B cell (primary cell): ENCODE measurements at regions of chr2 and their contacts with region 1.

Region 1: GRCh38 chr2:43219383-43220228 is 6.8 kb downstream of the ZFP36L2 start:
- DNase-seq: peak; percentile 89
- ATAC-seq: peak; percentile 48
- H3K4me3 ChIP-seq: peak overlapping the region; percentile 9 to 92 (median 82)
- H3K4me3 Mint-ChIP-seq: peak overlapping the region; percentile 87
- H3K27ac ChIP-seq: peak overlapping the region; percentile 87 to 90
- H3K27ac Mint-ChIP-seq: peak overlapping the region; percentile 94
- H3K4me1 ChIP-seq: peaks cover 52 to 62% of the 10 kb centered on the region in 2 donors
- H3K4me1 Mint-ChIP-seq: peaks cover 59% of the 10 kb centered on the region
- H3K27me3 ChIP-seq: no peaks in the 10 kb centered on the region
- H3K27me3 Mint-ChIP-seq: no peaks in the 10 kb centered on the region
- CTCF ChIP-seq: no peak

Region 2: GRCh38 chr2:42974721-42975717 is 244.6 kb before region 1 on chr2:
- CTCF ChIA-PET with region 1: interaction called, 18 read pairs
- POLR2A ChIA-PET with region 1: interaction called, 4 read pairs
- intact Hi-C with region 1: no loop called
- DNase-seq: peak; percentile 69
- ATAC-seq: peak; percentile 78
- H3K4me3 ChIP-seq: no peak overlapping the region
- H3K4me3 Mint-ChIP-seq: peak overlapping the region; percentile 26
- H3K27ac ChIP-seq: no peak overlapping the region
- H3K27ac Mint-ChIP-seq: no peak overlapping the region
- H3K4me1 ChIP-seq: peaks cover 30 to 31% of the 10 kb centered on the region in 2 donors
- H3K4me1 Mint-ChIP-seq: peaks cover 35% of the 10 kb centered on the region
- H3K27me3 ChIP-seq: peaks cover 0 to 3% (median 0%) of the 10 kb centered on the region in 4 experiments
- H3K27me3 Mint-ChIP-seq: no peaks in the 10 kb centered on the region
- CTCF ChIP-seq: peak; percentile 75

Region 3: GRCh38 chr2:43086451-43087221 is 133.0 kb before region 1 on chr2:
- CTCF ChIA-PET with region 1: no interaction called
- POLR2A ChIA-PET with region 1: no interaction called
- intact Hi-C with region 1: no loop called
- DNase-seq: no peak
- ATAC-seq: no peak
- H3K4me3 ChIP-seq: no peak overlapping the region
- H3K4me3 Mint-ChIP-seq: no peak overlapping the region
- H3K27ac ChIP-seq: no peak overlapping the region
- H3K27ac Mint-ChIP-seq: no peak overlapping the region
- H3K4me1 ChIP-seq: no peaks in the 10 kb centered on the region
- H3K4me1 Mint-ChIP-seq: peaks cover 2% of the 10 kb centered on the region
- H3K27me3 ChIP-seq: no peaks in the 10 kb centered on the region
- H3K27me3 Mint-ChIP-seq: no peaks in the 10 kb centered on the region
- CTCF ChIP-seq: no peak

Region 4: GRCh38 chr2:43105586-43106558 is 113.7 kb before region 1 on chr2:
- CTCF ChIA-PET with region 1: interaction called, 13 read pairs
- POLR2A ChIA-PET with region 1: interaction called, 3 read pairs
- intact Hi-C with region 1: no loop called
- DNase-seq: peak; percentile 78
- ATAC-seq: peak; percentile 65
- H3K4me3 ChIP-seq: no peak overlapping the region
- H3K4me3 Mint-ChIP-seq: peak overlapping the region; percentile 78
- H3K27ac ChIP-seq: peak overlapping the region; percentile 80 to 88
- H3K27ac Mint-ChIP-seq: peak overlapping the region; percentile 96
- H3K4me1 ChIP-seq: peaks cover 58 to 74% of the 10 kb centered on the region in 2 donors
- H3K4me1 Mint-ChIP-seq: peaks cover 61% of the 10 kb centered on the region
- H3K27me3 ChIP-seq: no peaks in the 10 kb centered on the region
- H3K27me3 Mint-ChIP-seq: no peaks in the 10 kb centered on the region
- CTCF ChIP-seq: peak; percentile 61

Region 5: GRCh38 chr2:43158259-43158880 is 61.2 kb before region 1 on chr2:
- CTCF ChIA-PET with region 1: interaction called, 449 read pairs
- POLR2A ChIA-PET with region 1: interaction called, 12 read pairs
- intact Hi-C with region 1: loop called (anchors 1 kb)
- DNase-seq: no peak
- ATAC-seq: peak; percentile 7
- H3K4me3 ChIP-seq: peak overlapping the region in 1 of 5 experiments; percentile 14
- H3K4me3 Mint-ChIP-seq: peak overlapping the region; percentile 81
- H3K27ac ChIP-seq: peak overlapping the region; percentile 80 to 84
- H3K27ac Mint-ChIP-seq: peak overlapping the region; percentile 97
- H3K4me1 ChIP-seq: peaks cover 27 to 51% of the 10 kb centered on the region in 2 donors
- H3K4me1 Mint-ChIP-seq: peaks cover 57% of the 10 kb centered on the region
- H3K27me3 ChIP-seq: no peaks in the 10 kb centered on the region
- H3K27me3 Mint-ChIP-seq: no peaks in the 10 kb centered on the region
- CTCF ChIP-seq: no peak

Region 6: DNA sequence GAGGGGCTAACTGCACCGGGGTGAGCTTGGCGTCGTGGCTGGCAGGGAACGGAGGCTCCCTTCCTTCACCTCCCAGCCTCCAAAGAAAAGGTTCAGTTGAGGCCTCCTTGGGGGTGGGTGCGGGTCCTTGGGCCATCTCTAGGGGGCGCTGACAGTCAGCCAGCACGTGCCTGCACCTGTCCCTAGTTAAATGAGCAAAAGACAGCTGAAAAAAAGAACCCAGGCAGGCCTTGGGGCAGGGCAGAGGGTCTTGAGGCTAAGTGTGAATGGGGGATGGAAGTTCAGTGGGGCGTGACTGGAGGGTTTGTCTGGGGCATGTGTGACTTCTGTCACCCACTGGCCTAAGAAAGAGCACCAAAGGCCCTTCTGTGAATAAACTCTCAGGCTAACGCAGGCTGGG is 49.6 kb before region 1 on chr2:
- CTCF ChIA-PET with region 1: interaction called, 449 read pairs
- POLR2A ChIA-PET with region 1: interaction called, 223 read pairs
- intact Hi-C with region 1: loop called (anchors 1 kb)
- DNase-seq: peak; percentile 59
- ATAC-seq: no peak
- H3K4me3 ChIP-seq: peak overlapping the region in 3 of 5 experiments; percentile 2 to 53 (median 35)
- H3K4me3 Mint-ChIP-seq: peak overlapping the region; percentile 87
- H3K27ac ChIP-seq: peak overlapping the region; percentile 85 to 91
- H3K27ac Mint-ChIP-seq: peak overlapping the region; percentile 100
- H3K4me1 ChIP-seq: peaks cover 69 to 84% of the 10 kb centered on the region in 2 donors
- H3K4me1 Mint-ChIP-seq: peaks cover 79% of the 10 kb centered on the region
- H3K27me3 ChIP-seq: no peaks in the 10 kb centered on the region
- H3K27me3 Mint-ChIP-seq: no peaks in the 10 kb centered on the region
- CTCF ChIP-seq: peak; percentile 46

Region 7: GRCh38 chr2:43178602-43179542 is 40.7 kb before region 1 on chr2:
- CTCF ChIA-PET with region 1: interaction called, 449 read pairs
- POLR2A ChIA-PET with region 1: interaction called, 223 read pairs
- intact Hi-C with region 1: loop called (anchors 1 kb)
- DNase-seq: no peak
- ATAC-seq: no peak
- H3K4me3 ChIP-seq: no peak overlapping the region
- H3K4me3 Mint-ChIP-seq: no peak overlapping the region
- H3K27ac ChIP-seq: peak overlapping the region in 1 of 2 donors; percentile 50
- H3K27ac Mint-ChIP-seq: peak overlapping the region; percentile 76
- H3K4me1 ChIP-seq: peaks cover 39 to 51% of the 10 kb centered on the region in 2 donors
- H3K4me1 Mint-ChIP-seq: peaks cover 52% of the 10 kb centered on the region
- H3K27me3 ChIP-seq: no peaks in the 10 kb centered on the region
- H3K27me3 Mint-ChIP-seq: no peaks in the 10 kb centered on the region
- CTCF ChIP-seq: no peak

Region 8: GRCh38 chr2:43194121-43194869 is 25.3 kb before region 1 on chr2:
- CTCF ChIA-PET with region 1: interaction called, 7 read pairs
- POLR2A ChIA-PET with region 1: interaction called, 20 read pairs
- intact Hi-C with region 1: loop called (anchors 1 kb)
- DNase-seq: no peak
- ATAC-seq: no peak
- H3K4me3 ChIP-seq: no peak overlapping the region
- H3K4me3 Mint-ChIP-seq: peak overlapping the region; percentile 40
- H3K27ac ChIP-seq: peak overlapping the region; percentile 78 to 89
- H3K27ac Mint-ChIP-seq: peak overlapping the region; percentile 85
- H3K4me1 ChIP-seq: peaks cover 40 to 64% of the 10 kb centered on the region in 2 donors
- H3K4me1 Mint-ChIP-seq: peaks cover 43% of the 10 kb centered on the region
- H3K27me3 ChIP-seq: no peaks in the 10 kb centered on the region
- H3K27me3 Mint-ChIP-seq: no peaks in the 10 kb centered on the region
- CTCF ChIP-seq: no peak

Region 9: DNA sequence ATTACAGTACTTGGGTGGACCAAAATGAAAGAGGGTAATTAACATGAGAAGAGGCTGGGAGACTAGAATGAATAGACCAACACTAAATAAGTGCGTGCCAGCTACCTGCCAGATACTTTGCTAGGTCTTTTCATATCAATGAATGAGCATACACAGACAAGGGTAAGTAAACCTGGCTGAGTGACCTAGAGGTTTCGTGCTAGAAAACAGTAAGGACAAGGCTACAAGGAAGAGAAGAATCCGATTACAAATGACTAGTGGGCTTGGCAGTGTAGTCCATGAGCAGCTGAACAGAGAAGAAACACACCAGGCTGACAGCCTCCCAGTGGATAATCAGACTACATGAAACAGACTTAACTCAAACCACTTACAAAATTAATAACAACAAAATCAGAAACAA is 311.6 kb after region 1 on chr2:
- CTCF ChIA-PET with region 1: no interaction called
- POLR2A ChIA-PET with region 1: no interaction called
- intact Hi-C with region 1: no loop called
- DNase-seq: no peak
- ATAC-seq: no peak
- H3K4me3 ChIP-seq: no peak overlapping the region
- H3K4me3 Mint-ChIP-seq: no peak overlapping the region
- H3K27ac ChIP-seq: no peak overlapping the region
- H3K27ac Mint-ChIP-seq: no peak overlapping the region
- H3K4me1 ChIP-seq: peaks cover 0 to 1% of the 10 kb centered on the region in 2 donors
- H3K4me1 Mint-ChIP-seq: peaks cover 4% of the 10 kb centered on the region
- H3K27me3 ChIP-seq: no peaks in the 10 kb centered on the region
- H3K27me3 Mint-ChIP-seq: no peaks in the 10 kb centered on the region
- CTCF ChIP-seq: no peak